A673 (cell line): ENCODE measurements at regions of chr6 and their contacts with region 1.

Region 1: DNA sequence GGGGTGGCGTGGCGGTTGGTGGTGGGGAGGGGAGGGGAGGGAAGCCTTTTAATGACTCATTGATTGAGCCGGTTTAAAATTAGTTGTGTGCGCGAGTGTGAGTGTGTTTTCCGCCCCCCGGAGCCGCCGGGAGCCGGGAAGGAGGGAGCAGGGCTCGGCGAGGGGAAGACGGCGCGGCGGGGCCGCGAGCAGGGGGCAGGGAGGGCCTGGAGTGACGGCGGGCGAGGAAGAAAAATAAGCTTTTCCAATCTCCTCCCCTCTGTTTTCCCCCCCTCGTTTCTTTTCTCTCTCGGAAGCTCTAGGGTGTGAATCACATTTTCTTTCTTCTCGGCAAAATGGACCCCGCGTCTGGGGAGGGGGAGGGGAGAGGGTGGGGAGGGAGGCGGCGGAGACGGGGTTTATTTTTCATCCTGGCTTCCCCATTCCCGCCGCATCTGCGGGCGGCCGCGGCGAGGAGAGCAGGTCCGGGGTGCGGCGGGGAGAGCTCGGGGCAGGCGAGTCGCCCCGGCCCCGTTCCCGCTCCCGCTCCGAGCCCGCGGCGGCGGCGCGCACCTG is 847 bp downstream of the BICRAL start:
- DNase-seq: peak; percentile 89
- H3K4me3 ChIP-seq: peak overlapping the region; percentile 75
- H3K27ac ChIP-seq: peak overlapping the region; percentile 98
- H3K4me1 ChIP-seq: peaks cover 29% of the 10 kb centered on the region
- H3K27me3 ChIP-seq: no peaks in the 10 kb centered on the region
- CTCF ChIP-seq: no peak

Region 2: GRCh38 chr6:42745707-42746462 is 36.8 kb before region 1 on chr6 and contains the start of gene TBCC:
- CTCF ChIA-PET with region 1: no interaction called
- POLR2A ChIA-PET with region 1: interaction called, 40 read pairs
- intact Hi-C with region 1: loop called (anchors 1 kb)
- DNase-seq: peak; percentile 99
- H3K4me3 ChIP-seq: peak within 1 kb of the TSS; percentile 98
- H3K27ac ChIP-seq: peak within 1 kb of the TSS; percentile 97
- H3K4me1 ChIP-seq: peaks cover 42% of the 10 kb centered on the region
- H3K27me3 ChIP-seq: no peaks in the 10 kb centered on the region
- CTCF ChIP-seq: no peak
- total RNA-seq, gene TBCC: 29.4 and 31.3 TPM in 2 replicates

Region 3: GRCh38 chr6:42756722-42757121 is 26.0 kb before region 1 on chr6:
- CTCF ChIA-PET with region 1: no interaction called
- POLR2A ChIA-PET with region 1: interaction called, 29 read pairs
- intact Hi-C with region 1: no loop called
- DNase-seq: no peak
- H3K4me3 ChIP-seq: no peak overlapping the region
- H3K27ac ChIP-seq: no peak overlapping the region
- H3K4me1 ChIP-seq: no peaks in the 10 kb centered on the region
- H3K27me3 ChIP-seq: no peaks in the 10 kb centered on the region
- CTCF ChIP-seq: no peak

Region 4: DNA sequence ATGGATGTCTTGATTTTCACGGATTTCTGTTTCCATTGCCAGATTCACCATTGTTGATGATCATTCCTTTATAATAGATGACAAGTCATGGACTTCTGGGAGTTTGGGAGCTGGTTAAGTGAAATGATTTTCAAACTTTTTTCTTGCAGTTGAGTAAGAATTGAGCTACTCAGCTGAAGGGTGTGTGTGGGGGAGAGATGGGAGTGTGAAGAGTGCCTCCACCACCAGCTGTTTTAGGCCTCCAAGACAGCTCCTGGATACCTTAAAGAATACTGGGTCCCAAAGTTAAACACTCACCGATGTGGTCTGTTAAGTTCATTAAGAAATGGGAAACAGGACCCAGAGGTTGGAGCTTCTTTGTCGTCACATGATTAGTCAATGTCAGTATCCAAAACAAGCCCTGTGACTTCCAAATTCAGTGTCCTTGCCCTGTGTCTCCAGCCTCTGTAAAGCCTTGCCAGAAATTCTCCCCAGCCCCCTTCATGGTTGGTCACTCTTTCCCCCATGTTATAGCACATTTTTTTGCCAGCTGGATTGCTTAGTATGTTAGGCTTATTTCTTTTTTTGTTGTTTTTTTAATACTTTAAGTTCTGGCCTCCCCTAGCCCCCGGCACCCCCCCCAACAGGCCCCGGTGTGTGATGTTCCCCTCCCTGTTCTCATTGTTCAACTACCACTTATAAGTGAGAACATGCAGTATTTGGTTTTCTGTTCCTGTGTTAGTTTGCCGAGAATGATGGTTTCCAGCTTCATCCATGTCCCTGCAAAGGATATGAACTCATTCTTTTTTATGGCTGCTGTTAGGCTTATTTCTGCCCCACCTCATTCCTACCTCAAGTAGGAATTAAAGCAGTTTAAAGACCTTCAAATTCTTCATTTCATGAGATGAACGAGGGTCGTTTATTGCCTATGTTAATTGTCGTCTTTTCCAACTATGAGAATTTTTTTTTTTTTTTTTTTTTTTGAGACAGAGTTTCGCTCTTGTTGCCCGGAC is 26.1 kb after region 1 on chr6:
- CTCF ChIA-PET with region 1: interaction called, 10 read pairs
- POLR2A ChIA-PET with region 1: no interaction called
- intact Hi-C with region 1: no loop called
- DNase-seq: no peak
- H3K4me3 ChIP-seq: no peak overlapping the region
- H3K27ac ChIP-seq: no peak overlapping the region
- H3K4me1 ChIP-seq: no peaks in the 10 kb centered on the region
- H3K27me3 ChIP-seq: no peaks in the 10 kb centered on the region
- CTCF ChIP-seq: no peak

Region 5: GRCh38 chr6:42901536-42901957 is 118.8 kb after region 1 on chr6:
- CTCF ChIA-PET with region 1: no interaction called
- POLR2A ChIA-PET with region 1: no interaction called
- intact Hi-C with region 1: no loop called
- DNase-seq: peak; percentile 92
- H3K4me3 ChIP-seq: peak overlapping the region; percentile 25
- H3K27ac ChIP-seq: no peak overlapping the region
- H3K4me1 ChIP-seq: peaks cover 33% of the 10 kb centered on the region
- H3K27me3 ChIP-seq: no peaks in the 10 kb centered on the region
- CTCF ChIP-seq: peak; percentile 89